Pancreas (tissue), 10 donors: ENCODE measurements at regions of chr12 and their contacts with region 1.

Region 1: DNA sequence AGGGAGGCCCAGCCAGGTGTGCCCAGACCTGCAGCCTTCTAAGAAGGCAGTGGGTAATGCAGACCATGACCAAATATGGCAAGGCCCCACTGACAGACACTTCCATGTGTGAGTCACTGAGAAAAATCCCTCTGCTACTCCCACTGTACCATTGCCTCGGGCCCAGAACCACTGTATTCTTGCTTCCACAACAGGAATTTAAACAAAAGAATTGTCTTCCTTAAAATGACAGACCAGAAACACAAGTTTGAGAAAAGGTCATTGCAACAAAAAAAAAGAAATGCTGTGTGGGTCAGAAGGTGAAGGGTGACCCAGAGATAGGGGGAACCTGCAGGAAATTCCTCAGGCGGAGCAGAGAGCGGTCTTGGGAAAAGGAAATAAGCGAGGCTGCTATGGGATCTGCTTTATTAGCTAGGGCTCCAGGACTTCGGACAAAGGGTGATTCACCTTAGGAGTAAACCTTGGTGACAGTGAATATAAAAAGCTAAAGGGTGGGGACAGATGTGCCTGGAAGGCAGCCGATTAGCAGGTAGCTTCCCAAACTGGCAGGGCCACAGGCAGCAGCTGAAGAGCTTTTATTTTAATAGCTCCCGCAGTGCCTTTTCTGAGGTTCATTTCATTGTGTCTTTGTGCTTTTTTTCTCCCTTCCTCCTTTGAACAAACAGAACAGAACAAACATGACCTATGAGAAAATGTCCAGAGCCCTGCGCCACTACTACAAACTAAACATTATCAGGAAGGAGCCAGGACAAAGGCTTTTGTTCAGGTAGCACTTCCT is 185.3 kb upstream of the BCL2L14 start:
- DNase-seq: peak in 3 of 6 donors; percentile 35 to 54 (median 42)
- ATAC-seq: peak; percentile 82 to 91 (median 84)
- H3K4me3 ChIP-seq: peak overlapping the region in 1 of 4 donors; percentile 18
- H3K27ac ChIP-seq: peak overlapping the region; percentile 49 to 90 (median 73)
- H3K4me1 ChIP-seq: peaks cover 19 to 34% (median 19%) of the 10 kb centered on the region in 3 donors
- H3K27me3 ChIP-seq: no peaks in the 10 kb centered on the region
- CTCF ChIP-seq: no peak

Region 2: GRCh38 chr12:11648831-11649702 is 236.4 kb before region 1 on chr12 and contains the start of gene ETV6:
- intact Hi-C with region 1: loop called in 1 of 3 experiments (anchors 5 kb)
- DNase-seq: peak; percentile 72 to 81 (median 78)
- ATAC-seq: peak; percentile 59 to 86 (median 77)
- H3K4me3 ChIP-seq: peak within 1 kb of the TSS; percentile 69 to 81 (median 76)
- H3K27ac ChIP-seq: peak within 1 kb of the TSS; percentile 94 to 98 (median 96)
- H3K4me1 ChIP-seq: peaks cover 11 to 22% (median 12%) of the 10 kb centered on the region in 3 donors
- H3K27me3 ChIP-seq: no peaks in the 10 kb centered on the region
- CTCF ChIP-seq: no peak
- total RNA-seq, gene ETV6: 16.1 to 31.6 (median 19.1) TPM